ENCODE measurements at regions of chr19 and their contacts with region 1.

Region 1: GRCh38 chr19:19531951-19532805 is 3.5 kb downstream of the YJEFN3 start:
- DNase-seq: peak; percentile 84
- H3K4me3 ChIP-seq: no peak overlapping the region
- H3K27ac ChIP-seq: no peak overlapping the region
- H3K4me1 ChIP-seq: no peaks in the 10 kb centered on the region
- H3K27me3 ChIP-seq: no peaks in the 10 kb centered on the region
- CTCF ChIP-seq: peak; percentile 98

Region 2: DNA sequence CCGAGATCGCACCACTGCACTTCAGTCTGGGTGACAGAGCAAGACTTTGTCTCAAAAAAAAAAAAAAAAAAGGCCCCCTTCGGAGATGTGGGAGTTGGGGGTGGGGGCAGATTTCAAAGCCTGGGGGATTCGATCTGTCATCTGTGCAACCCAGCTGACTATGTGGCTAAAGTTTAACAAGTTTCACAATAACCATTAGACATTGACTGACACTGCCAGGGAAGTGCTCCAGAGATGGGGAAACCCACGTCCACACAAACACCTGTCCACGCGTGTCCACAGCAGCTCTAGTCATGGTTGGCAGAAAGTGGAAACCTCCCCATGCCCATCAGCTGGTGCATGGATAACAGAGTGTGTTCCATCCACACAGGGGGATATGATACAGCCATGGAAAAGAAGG is 553.6 kb before region 1 on chr19:
- CTCF ChIA-PET with region 1: no interaction called
- POLR2A ChIA-PET with region 1: interaction called, 19 read pairs
- intact Hi-C with region 1: no loop called
- DNase-seq: no peak
- H3K4me3 ChIP-seq: no peak overlapping the region
- H3K27ac ChIP-seq: no peak overlapping the region
- H3K4me1 ChIP-seq: peaks cover 8% of the 10 kb centered on the region
- H3K27me3 ChIP-seq: no peaks in the 10 kb centered on the region
- CTCF ChIP-seq: no peak

Region 3: DNA sequence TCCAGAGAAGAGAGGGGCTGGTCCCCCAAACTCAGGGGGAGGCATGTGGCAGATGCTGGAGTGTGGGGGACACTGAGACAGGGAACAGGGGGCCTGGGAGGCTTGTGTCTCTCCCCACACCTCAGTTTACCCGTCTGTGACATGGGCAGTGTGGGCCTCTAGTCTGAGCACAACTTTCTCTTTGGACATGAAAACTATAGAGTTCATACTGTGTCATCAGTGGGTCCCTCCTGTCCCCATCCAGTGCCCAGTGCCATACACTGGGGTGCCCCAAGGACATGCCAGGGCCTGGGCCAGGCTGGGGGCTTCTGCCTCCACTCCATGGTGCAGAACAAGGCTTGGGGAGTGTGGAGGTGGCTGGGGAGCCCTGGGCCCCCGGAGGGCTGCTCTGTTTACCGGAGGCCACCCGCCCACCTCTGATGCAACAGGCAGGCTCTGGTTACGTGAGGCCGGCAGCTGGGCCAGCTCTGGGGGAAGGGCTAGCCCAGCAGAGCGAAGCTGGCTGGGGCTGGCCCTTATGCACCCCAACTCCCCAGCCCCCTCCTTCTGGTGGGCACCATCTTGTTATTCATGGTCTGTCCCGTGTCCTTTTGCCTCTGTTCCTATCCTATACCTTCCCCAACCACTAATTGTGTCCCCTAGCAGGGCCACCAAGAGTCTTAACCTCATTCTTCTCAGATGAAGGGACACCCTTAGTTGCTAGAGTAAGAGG is 360.2 kb before region 1 on chr19:
- CTCF ChIA-PET with region 1: no interaction called
- POLR2A ChIA-PET with region 1: no interaction called
- intact Hi-C with region 1: no loop called
- DNase-seq: peak; percentile 40
- H3K4me3 ChIP-seq: no peak overlapping the region
- H3K27ac ChIP-seq: peak overlapping the region; percentile 62
- H3K4me1 ChIP-seq: peaks cover 12% of the 10 kb centered on the region
- H3K27me3 ChIP-seq: no peaks in the 10 kb centered on the region
- CTCF ChIP-seq: no peak

Region 4: GRCh38 chr19:19214892-19215291 is 317.3 kb before region 1 on chr19:
- CTCF ChIA-PET with region 1: no interaction called
- POLR2A ChIA-PET with region 1: no interaction called
- intact Hi-C with region 1: no loop called
- DNase-seq: peak; percentile 68
- H3K4me3 ChIP-seq: no peak overlapping the region
- H3K27ac ChIP-seq: no peak overlapping the region
- H3K4me1 ChIP-seq: peaks cover 5% of the 10 kb centered on the region
- H3K27me3 ChIP-seq: peaks cover 36% of the 10 kb centered on the region
- CTCF ChIP-seq: no peak

Region 5: DNA sequence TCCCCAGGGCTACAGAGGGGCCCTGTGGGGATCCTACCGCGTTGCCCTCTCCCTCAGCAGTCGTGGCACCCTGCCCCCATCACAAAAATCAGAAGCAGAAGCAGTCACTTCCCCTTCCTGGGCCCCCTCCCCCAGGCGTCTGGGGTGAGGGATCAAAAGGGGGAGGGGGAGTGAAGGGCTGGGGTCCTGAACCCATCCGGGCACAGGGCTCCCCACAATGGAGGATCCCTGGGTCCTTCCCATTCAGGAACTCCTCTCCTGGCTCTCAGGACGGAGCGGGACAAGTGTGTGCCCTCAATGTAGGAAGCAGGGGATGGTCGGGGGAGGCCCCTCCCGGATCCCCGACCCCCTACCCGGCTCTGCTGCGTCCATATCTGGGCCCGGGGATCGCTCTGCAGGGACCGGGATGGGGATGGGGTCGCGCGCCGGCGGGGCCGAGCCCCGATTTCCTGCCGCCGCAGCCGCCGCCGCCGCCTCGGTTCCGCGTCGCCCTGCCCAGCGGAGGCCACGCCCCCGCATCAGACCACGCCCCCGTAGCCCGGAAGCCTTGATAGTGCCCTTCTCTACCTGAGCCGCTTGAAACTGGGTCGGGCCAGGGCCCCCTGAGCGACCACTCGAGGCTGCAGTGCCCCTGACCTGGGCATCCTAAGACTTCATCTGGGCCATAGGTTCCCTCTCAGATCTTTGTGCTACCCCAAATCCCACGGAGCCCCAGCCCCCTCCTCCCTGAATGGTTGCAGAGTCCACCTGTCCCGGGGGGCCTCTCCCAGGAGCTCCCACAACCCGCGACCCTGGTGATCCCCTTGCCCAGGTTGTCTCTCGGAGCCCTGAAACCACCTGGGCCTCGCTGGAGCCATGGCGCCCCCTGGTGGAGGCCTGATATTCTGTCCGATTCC is 111.2 kb after region 1 on chr19 and contains the start of gene GMIP:
- CTCF ChIA-PET with region 1: no interaction called
- POLR2A ChIA-PET with region 1: no interaction called
- intact Hi-C with region 1: loop called (anchors 1 kb)
- DNase-seq: peak; percentile 66
- H3K4me3 ChIP-seq: peak within 1 kb of the TSS; percentile 79
- H3K27ac ChIP-seq: peak within 1 kb of the TSS; percentile 58
- H3K4me1 ChIP-seq: no peaks in the 10 kb centered on the region
- H3K27me3 ChIP-seq: no peaks in the 10 kb centered on the region
- CTCF ChIP-seq: peak; percentile 96
- total RNA-seq, gene GMIP: 9.0 and 10.9 TPM in 2 replicates

Region 6: GRCh38 chr19:19956434-19957075 is 424.4 kb after region 1 on chr19:
- CTCF ChIA-PET with region 1: no interaction called
- POLR2A ChIA-PET with region 1: no interaction called
- intact Hi-C with region 1: loop called (anchors 2 kb)
- DNase-seq: peak; percentile 10
- H3K4me3 ChIP-seq: no peak overlapping the region
- H3K27ac ChIP-seq: no peak overlapping the region
- H3K4me1 ChIP-seq: no peaks in the 10 kb centered on the region
- H3K27me3 ChIP-seq: no peaks in the 10 kb centered on the region
- CTCF ChIP-seq: no peak

Measured in A673 (cell line).